HEK293 (cell line): ENCODE measurements at regions of chr18 and their contacts with region 1.

Region 1: DNA sequence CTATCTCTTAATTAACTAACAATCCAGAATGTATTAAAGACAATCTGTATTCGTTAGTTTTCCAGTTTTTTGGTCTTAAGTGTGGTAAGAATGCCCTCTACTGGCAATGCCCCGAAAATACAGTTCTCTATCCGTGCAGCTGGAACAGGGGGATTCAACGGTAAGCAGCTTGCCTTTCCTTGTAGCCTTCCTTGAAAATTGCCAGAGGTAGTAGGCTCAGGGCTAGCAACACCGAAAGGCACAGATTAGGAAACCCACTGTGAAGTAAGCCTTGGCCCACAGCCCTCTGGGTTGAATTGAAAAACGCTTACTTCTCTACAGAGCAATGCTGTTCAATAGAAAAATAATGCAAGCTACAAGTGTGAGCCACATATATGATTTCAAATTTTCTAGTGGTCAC is 17.1 kb upstream of the VPS4B start:
- H3K4me3 ChIP-seq: no peak overlapping the region
- H3K27ac ChIP-seq: no peak overlapping the region
- H3K4me1 ChIP-seq: no peaks in the 10 kb centered on the region
- CTCF ChIP-seq: peak; percentile 72

Region 2: DNA sequence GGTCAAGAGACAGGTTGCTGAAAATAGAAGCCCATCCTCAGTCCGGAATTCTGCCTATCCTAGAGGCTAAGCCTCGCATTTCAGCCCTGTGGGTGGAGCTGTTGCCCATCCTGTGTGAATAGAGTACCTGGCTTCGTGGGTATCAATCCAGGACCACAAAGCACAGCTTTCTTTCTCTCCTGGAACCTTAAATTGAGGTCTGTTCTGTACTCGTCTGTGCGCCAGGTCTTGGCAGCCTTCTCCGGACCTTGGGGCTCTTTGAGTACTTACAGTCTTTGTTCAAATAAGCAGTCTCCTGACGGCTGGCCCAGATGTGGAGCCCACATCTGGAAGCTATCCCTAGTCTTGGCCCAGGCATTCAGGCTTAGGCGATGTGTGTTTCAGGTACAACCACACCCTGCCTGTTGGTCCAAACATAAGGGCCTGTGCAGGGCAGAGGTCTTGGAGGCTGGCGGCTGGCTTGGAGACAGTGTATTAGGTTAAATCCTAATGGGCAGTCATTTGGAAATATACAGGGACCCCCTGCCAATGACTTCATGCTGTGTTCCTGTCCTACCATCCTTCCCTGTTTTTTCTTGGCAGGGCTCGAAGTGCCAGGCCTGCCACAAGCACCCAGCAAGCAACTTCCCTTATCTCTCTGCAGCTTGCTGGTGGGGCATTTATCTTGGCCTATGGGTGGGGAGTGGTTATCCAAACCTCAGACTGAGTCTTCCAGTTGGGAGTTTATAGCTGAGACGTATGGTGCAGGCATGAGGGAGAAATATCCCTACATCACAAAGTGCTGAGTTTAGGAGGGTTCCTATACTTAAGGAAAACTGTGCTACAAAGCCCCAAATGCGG is 413.9 kb before region 1 on chr18:
- CTCF ChIA-PET with region 1: interaction called, 16 read pairs
- POLR2A ChIA-PET with region 1: no interaction called
- H3K4me3 ChIP-seq: no peak overlapping the region
- H3K27ac ChIP-seq: no peak overlapping the region
- H3K4me1 ChIP-seq: no peaks in the 10 kb centered on the region
- CTCF ChIP-seq: 0 out of 2 replicates have a peak, but pooled peaks have one; percentile 34

Region 3: DNA sequence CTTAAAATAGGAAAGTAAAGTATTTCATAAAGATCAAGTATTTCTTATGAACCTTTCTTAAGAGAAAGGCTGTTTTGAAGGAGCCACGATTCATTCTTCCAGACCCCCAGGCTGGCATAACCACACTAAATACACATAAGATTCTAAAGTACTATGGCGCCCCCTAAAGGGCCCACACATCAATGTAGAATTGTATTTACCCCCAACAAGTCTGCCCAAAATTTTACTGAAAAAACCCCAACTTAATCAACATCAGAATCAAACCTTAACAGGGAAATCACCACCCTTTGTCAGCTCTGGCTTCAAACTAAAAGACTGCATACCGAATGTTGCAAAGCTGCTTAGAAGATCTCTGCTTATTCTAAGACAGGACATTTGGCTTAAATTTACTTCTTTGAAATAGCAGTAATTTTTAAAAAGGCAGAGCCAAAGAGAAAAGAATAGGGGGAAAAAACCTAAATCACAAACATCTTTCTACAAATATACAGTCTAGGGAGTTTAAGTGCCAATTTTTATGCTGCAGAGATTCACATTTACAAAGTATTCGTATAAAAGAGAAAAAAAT is 99.3 kb before region 1 on chr18:
- CTCF ChIA-PET with region 1: interaction called, 76 read pairs
- POLR2A ChIA-PET with region 1: no interaction called
- H3K4me3 ChIP-seq: no peak overlapping the region
- H3K27ac ChIP-seq: no peak overlapping the region
- H3K4me1 ChIP-seq: no peaks in the 10 kb centered on the region
- CTCF ChIP-seq: 0 out of 2 replicates have a peak, but pooled peaks have one; percentile 14

Region 4: DNA sequence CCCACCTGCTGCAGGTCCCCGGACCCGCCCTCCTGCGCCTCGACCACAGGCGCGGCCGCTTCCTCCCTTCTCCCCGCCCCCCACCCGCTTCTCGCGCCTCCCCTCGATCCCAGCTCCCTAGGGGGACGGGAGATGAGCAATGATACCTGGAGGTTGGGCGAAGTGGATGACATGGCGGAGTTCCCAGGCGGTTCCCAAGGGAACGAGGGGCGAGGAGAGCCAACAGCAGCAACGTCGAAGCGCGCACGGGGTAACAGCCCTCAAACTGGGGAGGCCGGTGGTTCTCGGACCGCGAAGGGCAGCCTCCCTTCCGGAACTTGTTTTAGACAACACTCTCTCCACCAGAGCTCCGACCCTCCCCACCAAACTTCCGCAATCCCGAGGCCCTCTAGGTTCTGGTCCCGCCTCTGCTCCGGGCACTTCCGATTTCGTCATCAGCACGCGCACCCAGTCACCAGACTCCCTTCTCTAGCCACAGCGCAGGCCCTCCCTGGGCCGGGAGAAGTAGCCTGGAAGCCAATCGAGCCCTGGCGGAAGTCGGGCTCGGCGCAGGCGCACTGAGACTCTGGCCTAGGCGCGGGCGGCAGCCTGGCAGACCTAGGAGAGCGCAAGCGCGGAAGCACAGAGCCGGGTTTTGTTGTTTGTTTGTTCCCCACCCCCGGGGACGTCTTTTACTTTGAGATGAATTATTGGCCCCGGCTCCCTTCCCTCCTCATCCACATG is 17.1 kb before region 1 on chr18 and contains the start of gene VPS4B:
- CTCF ChIA-PET with region 1: interaction called, 18 read pairs
- POLR2A ChIA-PET with region 1: interaction called, 5 read pairs
- H3K4me3 ChIP-seq: peak within 1 kb of the TSS; percentile 69
- H3K27ac ChIP-seq: peak within 1 kb of the TSS; percentile 88
- H3K4me1 ChIP-seq: no peaks in the 10 kb centered on the region; the same call in 1 of the 2 replicates
- CTCF ChIP-seq: no peak

Region 5: DNA sequence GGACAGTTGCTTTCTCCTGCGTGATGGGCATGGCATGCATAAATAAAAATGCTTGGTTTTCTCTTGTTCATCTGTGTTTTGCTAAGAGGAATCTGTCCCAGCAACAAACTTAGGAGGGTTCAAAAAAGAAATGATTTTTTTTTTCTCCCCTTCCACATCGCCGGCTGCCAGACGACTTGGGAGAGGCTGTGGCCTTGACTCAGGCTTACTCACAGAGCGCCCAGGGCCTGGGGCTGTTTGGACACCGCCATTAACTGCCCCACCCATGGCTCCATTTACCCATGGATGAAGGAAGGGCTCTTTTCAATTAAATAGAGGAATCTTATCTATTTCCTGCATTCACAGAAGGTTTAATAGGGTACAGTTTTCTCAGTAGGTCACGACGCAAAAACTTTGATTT is 15.2 kb after region 1 on chr18:
- CTCF ChIA-PET with region 1: interaction called, 16 read pairs
- POLR2A ChIA-PET with region 1: no interaction called
- H3K4me3 ChIP-seq: no peak overlapping the region
- H3K27ac ChIP-seq: no peak overlapping the region
- H3K4me1 ChIP-seq: peaks cover 22% of the 10 kb centered on the region
- CTCF ChIP-seq: no peak